ENCODE measurements at regions of chr4 and their contacts with region 1.

Region 1: GRCh38 chr4:27084685-27085361 is 224.2 kb downstream of the STIM2 start:
- DNase-seq: no peak
- H3K4me3 ChIP-seq: peak overlapping the region; percentile 29 to 43 (median 40)
- H3K27ac ChIP-seq: no peak overlapping the region
- H3K4me1 ChIP-seq: peaks cover 7 to 14% (median 12%) of the 10 kb centered on the region in 4 donors
- H3K27me3 ChIP-seq: peaks cover 0 to 50% (median 4%) of the 10 kb centered on the region in 4 donors
- CTCF ChIP-seq: peak in 1 of 3 experiments; percentile 7
- EP300 ChIP-seq: no peak
- POLR2A ChIP-seq: no peak

Region 2: DNA sequence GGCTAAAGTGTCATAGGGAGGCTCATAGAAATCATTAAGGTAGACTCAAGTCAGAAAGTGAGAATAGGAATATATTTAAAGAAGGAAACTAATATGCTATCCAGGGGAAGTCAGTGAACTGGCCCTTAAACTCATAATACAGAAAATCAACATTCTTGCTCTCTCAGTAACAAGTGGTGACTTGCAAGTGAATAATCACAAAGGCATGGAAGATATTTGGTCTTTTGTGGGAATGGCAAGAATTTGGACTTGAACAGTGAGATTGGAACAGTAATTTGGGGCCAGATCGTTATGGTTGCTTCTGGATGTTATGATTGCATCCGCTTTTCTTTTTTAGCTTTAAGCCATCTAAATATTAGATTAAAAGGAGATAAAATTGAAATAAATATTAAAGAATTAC is 397.1 kb before region 1 on chr4:
- intact Hi-C with region 1: no loop called
- DNase-seq: no peak
- H3K4me3 ChIP-seq: no peak overlapping the region
- H3K27ac ChIP-seq: no peak overlapping the region
- H3K4me1 ChIP-seq: no peaks in the 10 kb centered on the region
- H3K27me3 ChIP-seq: no peaks in the 10 kb centered on the region
- CTCF ChIP-seq: no peak
- EP300 ChIP-seq: no peak
- POLR2A ChIP-seq: no peak

Region 3: DNA sequence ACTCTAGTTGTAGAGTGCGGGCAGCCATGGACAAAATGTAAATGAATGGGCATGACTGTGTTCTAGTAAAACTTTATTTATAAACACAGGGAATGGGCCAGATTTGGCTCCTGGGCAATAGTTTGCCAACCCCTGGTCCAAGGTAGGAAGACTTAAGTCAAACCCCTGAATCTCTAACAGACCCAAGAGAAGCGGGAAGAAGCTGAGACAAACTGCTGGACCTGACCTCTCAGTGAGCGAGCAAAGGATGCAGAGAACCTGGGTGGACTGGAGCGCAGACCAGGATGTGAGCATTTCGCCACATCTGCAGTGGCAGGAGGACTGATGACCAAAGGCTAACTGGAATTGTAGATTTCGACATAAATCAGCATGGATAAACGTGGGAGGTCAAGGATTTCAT is 22.6 kb before region 1 on chr4:
- intact Hi-C with region 1: loop called (anchors 2 kb)
- DNase-seq: peak; percentile 89
- H3K4me3 ChIP-seq: no peak overlapping the region
- H3K27ac ChIP-seq: no peak overlapping the region
- H3K4me1 ChIP-seq: no peaks in the 10 kb centered on the region
- H3K27me3 ChIP-seq: no peaks in the 10 kb centered on the region
- CTCF ChIP-seq: no peak
- EP300 ChIP-seq: no peak
- POLR2A ChIP-seq: no peak